Activated CD4-positive, alpha-beta T cell treated with anti-CD3 and anti-CD28 coated beads for 36 hours (primary cell): ENCODE measurements at regions of chr20 and their contacts with region 1.

Region 1: DNA sequence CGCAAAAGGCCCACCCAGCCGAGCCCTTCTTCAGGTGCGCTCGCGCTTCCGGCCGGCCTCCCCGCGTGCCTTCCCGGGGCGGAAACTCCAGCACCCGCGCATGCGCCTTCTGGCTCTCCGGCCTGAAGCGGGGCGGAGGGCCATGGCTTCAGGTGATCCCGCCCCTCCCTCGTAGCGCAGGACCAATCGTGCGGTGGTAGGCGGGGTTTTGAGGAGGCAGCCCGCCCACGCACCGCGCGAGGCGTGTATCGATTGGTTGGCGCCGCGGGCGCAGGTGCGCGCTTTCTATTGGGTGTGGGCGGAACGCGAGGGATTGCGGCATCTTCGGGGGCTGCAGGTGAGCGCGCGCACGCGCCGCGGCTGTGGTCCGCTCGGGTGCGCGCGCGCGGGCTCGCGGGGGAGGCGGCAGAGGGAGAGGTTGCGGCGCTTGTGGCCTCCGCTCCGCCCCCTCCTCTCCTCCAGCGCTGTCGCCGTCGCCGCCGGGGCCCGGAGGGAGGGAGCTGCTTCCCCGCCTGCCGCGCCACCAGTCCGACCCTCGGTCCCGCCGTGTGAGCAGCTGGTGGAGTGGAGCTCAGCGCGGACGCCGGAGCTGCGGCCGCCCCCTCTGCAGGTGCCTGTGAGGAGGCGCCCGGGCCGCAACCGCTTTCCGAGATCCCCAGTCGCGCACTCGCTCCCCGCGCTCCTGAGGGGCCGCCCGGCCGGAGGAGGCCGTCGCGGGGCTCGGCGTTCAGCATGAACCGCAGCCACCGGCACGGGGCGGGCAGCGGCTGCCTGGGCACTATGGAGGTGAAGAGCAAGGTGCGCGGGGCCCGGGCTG is at the start of gene PARD6B:
- DNase-seq: peak; percentile 100
- ATAC-seq: peak; percentile 92
- H3K4me3 Mint-ChIP-seq: peak within 1 kb of the TSS; percentile 85
- H3K27ac Mint-ChIP-seq: peak within 1 kb of the TSS; percentile 78
- H3K4me1 Mint-ChIP-seq: peaks cover 46% of the 10 kb centered on the region
- H3K27me3 Mint-ChIP-seq: no peaks in the 10 kb centered on the region
- total RNA-seq, gene PARD6B: 4.9 to 6.2 TPM

Region 2: DNA sequence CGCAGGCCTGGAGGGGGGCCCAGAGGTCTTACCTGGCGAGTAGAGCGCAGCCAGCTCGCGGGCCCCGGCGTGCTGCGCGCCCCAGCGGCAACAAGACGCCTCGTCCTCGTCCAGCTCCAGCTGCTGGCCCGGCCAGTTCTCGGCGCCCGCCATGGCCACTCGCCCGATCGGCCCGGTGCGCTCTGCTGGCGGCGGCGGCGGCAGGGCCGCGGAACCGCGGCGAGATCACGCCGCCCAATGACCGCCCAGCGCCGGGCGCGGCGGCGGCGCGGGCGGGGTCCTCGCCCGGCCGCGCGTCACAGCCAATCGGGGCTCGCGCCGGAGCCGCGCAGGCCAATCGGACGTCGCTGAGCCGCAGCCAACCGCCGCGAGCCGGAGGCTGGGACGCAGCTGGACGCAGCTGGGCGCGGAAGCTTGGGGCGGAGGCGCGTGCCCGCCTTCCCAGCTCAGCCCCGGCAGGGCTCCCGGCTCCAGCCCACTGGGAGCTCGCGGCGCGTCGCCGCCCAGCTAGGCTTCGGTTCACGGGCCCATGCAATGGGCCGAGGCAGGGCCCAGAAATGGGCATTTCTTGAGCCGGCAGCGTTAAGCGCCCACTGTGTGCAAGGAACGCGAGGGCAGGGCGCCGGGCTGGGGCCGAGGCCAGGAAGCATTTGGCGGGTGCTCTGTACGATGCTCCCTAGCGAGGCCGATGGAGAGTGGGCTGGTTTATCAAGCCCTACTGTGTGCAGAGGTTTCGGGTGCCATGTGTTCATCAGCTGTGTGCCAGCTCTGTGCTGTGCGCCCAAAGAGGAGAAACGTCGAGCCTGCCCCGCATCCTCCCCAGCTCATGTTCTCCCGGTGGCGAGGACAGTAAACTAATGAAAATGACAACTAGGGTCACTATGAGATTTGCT is 577.5 kb before region 1 on chr20 and contains the start of gene PEDS1:
- CTCF ChIA-PET with region 1: interaction called, 3 read pairs
- POLR2A ChIA-PET with region 1: no interaction called
- intact Hi-C with region 1: loop called in 1 of 2 experiments (anchors 1 kb)
- DNase-seq: peak; percentile 91
- ATAC-seq: peak; percentile 98
- H3K4me3 Mint-ChIP-seq: peak within 1 kb of the TSS; percentile 75
- H3K27ac Mint-ChIP-seq: peak within 1 kb of the TSS; percentile 88
- H3K4me1 Mint-ChIP-seq: peaks cover 36% of the 10 kb centered on the region
- H3K27me3 Mint-ChIP-seq: no peaks in the 10 kb centered on the region
- total RNA-seq, gene PEDS1: 13.2 to 16.8 TPM

Region 3: DNA sequence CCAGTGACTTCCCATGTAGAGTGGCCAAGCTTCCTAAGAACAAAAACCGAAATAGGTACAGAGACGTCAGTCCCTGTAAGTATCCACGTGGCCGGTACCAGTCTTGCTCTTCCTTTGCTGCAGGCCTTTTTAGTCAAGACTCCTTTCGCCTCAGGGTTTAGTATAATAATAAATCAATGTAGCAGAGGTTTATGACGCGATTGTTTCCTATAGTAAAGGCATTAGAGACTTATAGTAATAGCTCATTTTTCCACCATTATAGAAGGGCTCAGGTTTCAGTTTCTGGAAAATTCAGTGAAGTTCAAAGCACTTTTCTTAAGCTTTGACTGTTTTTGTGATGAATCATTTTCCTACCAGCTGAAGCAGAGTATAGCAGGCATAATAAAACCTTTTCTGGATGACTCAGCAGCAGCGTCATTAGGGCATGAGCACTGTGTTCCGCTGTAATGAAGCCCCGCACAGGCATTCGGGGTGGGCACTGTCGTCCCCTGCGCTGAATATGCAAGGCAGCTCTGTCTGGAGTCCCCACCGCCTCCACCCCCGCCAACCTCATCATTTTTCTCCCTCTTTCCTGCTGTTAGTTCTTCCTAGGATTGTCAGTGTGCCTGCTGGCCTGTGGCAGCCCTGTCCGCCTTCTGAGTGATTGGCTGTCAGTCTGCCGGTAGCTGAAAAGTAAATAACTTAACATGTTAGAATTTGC is 169.7 kb before region 1 on chr20:
- CTCF ChIA-PET with region 1: no interaction called
- POLR2A ChIA-PET with region 1: no interaction called
- intact Hi-C with region 1: loop called in 1 of 2 experiments (anchors 1 kb)
- DNase-seq: peak; percentile 85
- ATAC-seq: peak; percentile 84
- H3K4me3 Mint-ChIP-seq: peak overlapping the region; percentile 76
- H3K27ac Mint-ChIP-seq: peak overlapping the region; percentile 99
- H3K4me1 Mint-ChIP-seq: peaks cover 85% of the 10 kb centered on the region
- H3K27me3 Mint-ChIP-seq: no peaks in the 10 kb centered on the region

Region 4: DNA sequence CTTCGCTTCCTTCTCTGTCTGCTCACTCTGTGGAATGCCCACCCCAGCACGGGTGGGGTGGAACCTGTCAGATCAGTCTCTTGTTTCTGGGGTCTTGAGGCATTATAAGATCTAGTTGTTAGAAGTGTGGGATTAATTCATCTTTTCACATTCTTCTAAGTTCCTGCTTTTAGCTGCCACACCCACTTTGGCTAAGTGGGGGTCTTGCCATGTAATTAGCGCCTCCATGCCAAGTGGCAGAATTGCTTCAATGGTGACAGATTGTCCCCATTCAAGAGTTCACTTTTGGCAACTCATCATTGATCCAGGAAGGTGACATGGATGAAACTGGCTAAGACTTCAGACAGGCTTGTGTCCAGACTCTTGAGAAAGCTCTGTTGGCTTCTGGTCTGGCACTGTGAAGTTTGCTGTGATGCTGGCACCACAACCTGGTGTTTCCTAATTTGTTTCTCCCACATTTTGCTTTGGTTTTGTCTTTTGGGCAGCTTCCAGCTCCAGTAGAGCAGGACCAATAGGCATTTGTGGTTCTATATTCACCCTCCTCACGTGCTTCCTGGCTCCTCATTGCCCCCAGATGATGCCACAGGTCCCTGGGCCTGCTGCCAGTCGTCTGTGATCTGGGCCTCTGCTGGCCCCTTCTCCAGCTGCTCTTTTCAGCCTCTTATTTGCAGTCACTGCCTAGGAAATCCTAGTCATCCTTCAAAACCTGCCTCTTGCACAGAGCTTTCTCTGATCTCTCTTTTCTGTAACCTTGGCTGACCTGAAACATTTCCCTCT is 158.4 kb before region 1 on chr20:
- CTCF ChIA-PET with region 1: no interaction called
- POLR2A ChIA-PET with region 1: no interaction called
- intact Hi-C with region 1: no loop called
- DNase-seq: no peak
- ATAC-seq: no peak
- H3K4me3 Mint-ChIP-seq: no peak overlapping the region
- H3K27ac Mint-ChIP-seq: peak overlapping the region; percentile 32
- H3K4me1 Mint-ChIP-seq: peaks cover 71% of the 10 kb centered on the region
- H3K27me3 Mint-ChIP-seq: no peaks in the 10 kb centered on the region

Region 5: GRCh38 chr20:50744143-50744792 is 13.0 kb after region 1 on chr20:
- CTCF ChIA-PET with region 1: interaction called, 27 read pairs
- POLR2A ChIA-PET with region 1: no interaction called
- intact Hi-C with region 1: loop called (anchors 1 to 2 kb)
- DNase-seq: peak; percentile 40
- ATAC-seq: no peak
- H3K4me3 Mint-ChIP-seq: no peak overlapping the region
- H3K27ac Mint-ChIP-seq: peak overlapping the region; percentile 71
- H3K4me1 Mint-ChIP-seq: peaks cover 46% of the 10 kb centered on the region
- H3K27me3 Mint-ChIP-seq: no peaks in the 10 kb centered on the region

Region 6: DNA sequence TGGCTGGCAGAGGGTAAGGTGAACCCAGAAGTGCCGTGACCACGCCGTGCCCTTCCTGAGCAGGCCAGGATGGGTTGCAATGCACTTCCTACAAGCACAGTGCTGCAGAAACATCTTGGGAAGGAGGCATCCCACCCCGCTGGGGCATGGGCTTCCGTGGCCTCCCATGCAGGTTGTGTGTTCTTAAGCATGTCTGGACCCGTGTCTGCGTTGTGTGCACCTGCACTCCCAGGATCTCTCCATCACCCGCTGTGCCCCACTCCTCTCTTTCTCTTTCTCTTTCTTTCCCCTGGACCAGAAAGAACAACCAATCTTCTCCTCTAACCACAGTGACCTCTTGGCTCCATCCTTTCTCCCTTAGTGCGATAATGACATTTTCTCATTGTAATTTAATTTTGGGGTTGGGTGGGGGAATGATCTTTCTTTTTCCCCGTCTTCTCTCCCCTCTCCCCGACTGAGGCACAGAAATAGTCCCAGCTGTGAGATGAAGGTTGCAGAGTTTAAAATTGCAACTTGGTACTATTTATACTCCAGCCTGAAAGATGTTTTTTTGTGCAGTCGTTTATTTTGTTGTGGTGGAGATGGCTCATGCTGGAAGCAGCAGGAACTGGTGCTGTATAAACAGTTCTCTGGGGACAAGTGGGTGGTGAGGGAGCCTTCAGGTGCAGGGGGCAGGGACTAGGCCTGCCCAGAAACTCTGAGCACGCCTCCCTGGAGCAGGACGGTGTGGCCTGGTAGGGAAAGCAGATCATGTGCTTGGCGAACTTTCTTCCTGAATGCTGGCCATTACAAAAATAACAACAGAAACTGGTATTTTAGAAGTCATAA is 84.1 kb after region 1 on chr20:
- CTCF ChIA-PET with region 1: no interaction called
- POLR2A ChIA-PET with region 1: no interaction called
- intact Hi-C with region 1: loop called in 1 of 2 experiments (anchors 1 kb)
- DNase-seq: peak; percentile 57
- ATAC-seq: peak; percentile 60
- H3K4me3 Mint-ChIP-seq: peak overlapping the region; percentile 60
- H3K27ac Mint-ChIP-seq: peak overlapping the region; percentile 71
- H3K4me1 Mint-ChIP-seq: peaks cover 28% of the 10 kb centered on the region
- H3K27me3 Mint-ChIP-seq: no peaks in the 10 kb centered on the region

Region 7: GRCh38 chr20:50929299-50930138 is 198.3 kb after region 1 on chr20:
- CTCF ChIA-PET with region 1: no interaction called
- POLR2A ChIA-PET with region 1: no interaction called
- intact Hi-C with region 1: loop called in 1 of 2 experiments (anchors 1 kb)
- DNase-seq: peak; percentile 98
- ATAC-seq: peak; percentile 80
- H3K4me3 Mint-ChIP-seq: peak overlapping the region; percentile 92
- H3K27ac Mint-ChIP-seq: peak overlapping the region; percentile 95
- H3K4me1 Mint-ChIP-seq: peaks cover 55% of the 10 kb centered on the region
- H3K27me3 Mint-ChIP-seq: no peaks in the 10 kb centered on the region

Region 8: DNA sequence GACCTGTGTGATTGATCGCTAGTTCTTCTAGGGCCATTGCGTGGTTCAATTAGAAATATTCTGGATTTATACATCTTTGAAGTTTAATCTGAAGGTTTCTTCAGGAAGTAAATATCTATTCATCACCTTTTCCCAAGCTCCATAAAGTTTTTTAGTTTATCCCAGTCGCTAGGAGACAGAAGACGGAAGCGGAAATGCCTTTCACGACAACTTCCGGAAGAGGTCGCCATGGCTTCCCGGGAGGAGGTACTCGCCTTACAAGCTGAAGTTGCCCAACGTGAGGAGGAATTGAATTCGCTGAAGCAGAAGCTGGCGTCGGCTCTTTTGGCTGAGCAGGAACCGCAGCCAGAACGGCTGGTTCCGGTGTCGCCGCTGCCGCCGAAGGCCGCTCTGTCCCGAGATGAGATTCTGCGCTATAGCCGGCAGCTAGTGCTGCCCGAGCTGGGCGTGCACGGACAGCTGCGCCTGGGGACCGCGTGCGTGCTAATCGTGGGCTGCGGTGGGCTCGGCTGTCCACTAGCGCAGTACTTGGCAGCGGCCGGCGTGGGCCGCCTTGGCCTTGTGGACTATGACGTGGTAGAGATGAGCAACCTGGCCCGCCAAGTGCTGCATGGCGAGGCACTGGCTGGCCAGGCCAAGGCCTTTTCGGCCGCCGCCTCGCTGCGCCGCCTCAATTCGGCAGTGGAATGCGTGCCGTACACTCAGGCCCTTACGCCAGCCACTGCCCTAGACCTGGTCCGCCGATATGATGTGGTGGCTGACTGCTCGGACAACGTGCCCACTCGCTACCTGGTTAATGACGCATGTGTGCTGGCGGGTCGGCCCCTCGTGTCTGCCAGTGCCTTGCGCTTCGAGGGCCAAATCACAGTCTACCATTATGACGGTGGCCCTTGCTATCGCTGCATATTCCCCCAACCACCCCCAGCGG is 227.6 kb after region 1 on chr20 and contains the start of gene MOCS3:
- CTCF ChIA-PET with region 1: no interaction called
- POLR2A ChIA-PET with region 1: no interaction called
- intact Hi-C with region 1: loop called in 1 of 2 experiments (anchors 1 kb)
- DNase-seq: peak; percentile 89
- ATAC-seq: peak; percentile 82
- H3K4me3 Mint-ChIP-seq: peak within 1 kb of the TSS; percentile 99
- H3K27ac Mint-ChIP-seq: peak within 1 kb of the TSS; percentile 99
- H3K4me1 Mint-ChIP-seq: peaks cover 47% of the 10 kb centered on the region
- H3K27me3 Mint-ChIP-seq: no peaks in the 10 kb centered on the region
- total RNA-seq, gene MOCS3: 3.1 to 3.8 TPM